ENCODE measurements at regions of chr6 and their contacts with region 1.

Region 1: GRCh38 chr6:24743265-24743943 is 24.4 kb upstream of the C6orf62 start:
- DNase-seq: peak; percentile 93
- ATAC-seq: peak; percentile 98
- H3K4me3 ChIP-seq: peak overlapping the region; percentile 56
- H3K27ac ChIP-seq: peak overlapping the region; percentile 97
- H3K4me1 ChIP-seq: peaks cover 24% of the 10 kb centered on the region
- H3K27me3 ChIP-seq: no peaks in the 10 kb centered on the region
- CTCF ChIP-seq: no peak

Region 2: GRCh38 chr6:24710519-24711303 is 32.7 kb before region 1 on chr6:
- CTCF ChIA-PET with region 1: no interaction called
- POLR2A ChIA-PET with region 1: interaction called, 10 read pairs
- intact Hi-C with region 1: no loop called
- DNase-seq: no peak
- ATAC-seq: no peak
- H3K4me3 ChIP-seq: no peak overlapping the region
- H3K27ac ChIP-seq: no peak overlapping the region
- H3K4me1 ChIP-seq: no peaks in the 10 kb centered on the region
- H3K27me3 ChIP-seq: no peaks in the 10 kb centered on the region
- CTCF ChIP-seq: no peak

Measured in PC-3 (cell line).